ENCODE measurements at regions of chr15 and their contacts with region 1.

Region 1: GRCh38 chr15:42704492-42704926 is 32.4 kb downstream of the CDAN1 start:
- DNase-seq: peak; percentile 51 to 69 (median 67)
- H3K4me3 ChIP-seq: no peak overlapping the region
- H3K4me3 Mint-ChIP-seq: no peak overlapping the region
- H3K27ac ChIP-seq: no peak overlapping the region
- H3K27ac Mint-ChIP-seq: no peak overlapping the region
- H3K4me1 ChIP-seq: no peaks in the 10 kb centered on the region
- H3K4me1 Mint-ChIP-seq: peaks cover 2% of the 10 kb centered on the region
- H3K27me3 ChIP-seq: no peaks in the 10 kb centered on the region
- H3K27me3 Mint-ChIP-seq: peaks cover 0 to 2% (median 0%) of the 10 kb centered on the region in 3 donors
- CTCF ChIP-seq: peak; percentile 83

Region 2: GRCh38 chr15:42929306-42929848 is 224.9 kb after region 1 on chr15:
- intact Hi-C with region 1: loop called (anchors 2 to 5 kb)
- DNase-seq: no peak
- H3K4me3 ChIP-seq: no peak overlapping the region
- H3K4me3 Mint-ChIP-seq: no peak overlapping the region
- H3K27ac ChIP-seq: no peak overlapping the region
- H3K27ac Mint-ChIP-seq: no peak overlapping the region
- H3K4me1 ChIP-seq: no peaks in the 10 kb centered on the region
- H3K4me1 Mint-ChIP-seq: no peaks in the 10 kb centered on the region
- H3K27me3 ChIP-seq: no peaks in the 10 kb centered on the region
- H3K27me3 Mint-ChIP-seq: peaks cover 0 to 2% (median 1%) of the 10 kb centered on the region in 3 donors
- CTCF ChIP-seq: no peak

Region 3: DNA sequence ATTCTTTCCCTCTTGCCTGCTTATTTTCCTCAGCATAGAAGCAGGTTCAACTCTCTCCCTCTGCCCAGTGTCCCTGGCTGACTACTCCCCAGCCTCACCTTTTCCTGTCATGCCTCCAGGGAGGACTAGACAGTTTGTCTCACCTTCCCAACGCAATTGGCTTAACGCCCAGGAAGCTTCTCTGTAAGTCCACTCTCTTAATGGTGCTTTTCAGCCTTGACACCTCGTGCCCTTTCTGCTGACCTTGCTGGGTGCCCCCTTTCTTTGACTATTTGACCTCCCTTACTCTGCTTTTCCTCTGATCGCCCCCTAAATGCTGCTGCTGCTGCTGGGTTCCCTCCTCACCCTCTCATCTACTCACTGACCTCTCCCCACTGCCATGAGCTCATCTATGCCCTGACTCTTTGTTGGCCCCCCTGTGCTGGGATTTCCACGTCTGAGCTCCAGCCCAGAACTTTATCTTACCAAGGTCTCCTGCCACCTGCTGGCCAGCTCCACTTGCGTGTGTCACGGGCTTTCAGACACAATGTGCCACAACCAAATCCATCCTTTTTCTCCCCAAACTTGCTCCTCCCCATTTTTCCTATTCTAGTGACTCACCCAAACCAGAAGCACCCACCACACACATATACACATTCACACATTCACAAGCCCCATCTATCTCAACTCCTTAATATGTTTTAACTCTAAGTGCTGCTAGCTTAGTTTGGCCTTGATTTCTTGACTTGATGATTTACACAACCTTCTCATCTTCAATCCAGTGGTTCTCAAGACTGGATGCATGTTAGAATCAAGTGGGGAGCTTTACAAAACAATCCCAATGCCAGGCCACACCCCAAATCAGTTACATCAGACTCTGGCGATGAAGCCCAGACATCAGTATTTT is 499.8 kb after region 1 on chr15:
- intact Hi-C with region 1: loop called in 1 of 2 experiments (anchors 10 kb)
- DNase-seq: peak in 2 of 3 donors; percentile 12 to 46
- H3K4me3 ChIP-seq: no peak overlapping the region
- H3K4me3 Mint-ChIP-seq: no peak overlapping the region
- H3K27ac ChIP-seq: no peak overlapping the region
- H3K27ac Mint-ChIP-seq: peak overlapping the region in 2 of 7 donors; percentile 0 to 14
- H3K4me1 ChIP-seq: no peaks in the 10 kb centered on the region
- H3K4me1 Mint-ChIP-seq: peaks cover 9% of the 10 kb centered on the region
- H3K27me3 ChIP-seq: no peaks in the 10 kb centered on the region
- H3K27me3 Mint-ChIP-seq: peaks cover 5 to 19% (median 13%) of the 10 kb centered on the region in 3 donors
- CTCF ChIP-seq: peak; percentile 48

Region 4: GRCh38 chr15:43270676-43271306 is 566.3 kb after region 1 on chr15:
- intact Hi-C with region 1: loop called in 1 of 2 experiments (anchors 10 kb)
- DNase-seq: no peak
- H3K4me3 ChIP-seq: no peak overlapping the region
- H3K4me3 Mint-ChIP-seq: no peak overlapping the region
- H3K27ac ChIP-seq: no peak overlapping the region
- H3K27ac Mint-ChIP-seq: peak overlapping the region in 1 of 7 donors; percentile 38
- H3K4me1 ChIP-seq: peaks cover 0 to 4% of the 10 kb centered on the region in 2 donors
- H3K4me1 Mint-ChIP-seq: peaks cover 6% of the 10 kb centered on the region
- H3K27me3 ChIP-seq: no peaks in the 10 kb centered on the region
- H3K27me3 Mint-ChIP-seq: peaks cover 4 to 13% (median 12%) of the 10 kb centered on the region in 3 donors
- CTCF ChIP-seq: no peak